ENCODE measurements at regions of chr5 and their contacts with region 1.

Region 1: GRCh38 chr5:138185957-138186447 is 7.1 kb downstream of the KIF20A start:
- DNase-seq: no peak
- ATAC-seq: no peak
- H3K4me3 ChIP-seq: no peak overlapping the region
- H3K27ac ChIP-seq: no peak overlapping the region
- H3K4me1 ChIP-seq: peaks cover 4% of the 10 kb centered on the region
- H3K27me3 ChIP-seq: no peaks in the 10 kb centered on the region
- CTCF ChIP-seq: no peak

Region 2: DNA sequence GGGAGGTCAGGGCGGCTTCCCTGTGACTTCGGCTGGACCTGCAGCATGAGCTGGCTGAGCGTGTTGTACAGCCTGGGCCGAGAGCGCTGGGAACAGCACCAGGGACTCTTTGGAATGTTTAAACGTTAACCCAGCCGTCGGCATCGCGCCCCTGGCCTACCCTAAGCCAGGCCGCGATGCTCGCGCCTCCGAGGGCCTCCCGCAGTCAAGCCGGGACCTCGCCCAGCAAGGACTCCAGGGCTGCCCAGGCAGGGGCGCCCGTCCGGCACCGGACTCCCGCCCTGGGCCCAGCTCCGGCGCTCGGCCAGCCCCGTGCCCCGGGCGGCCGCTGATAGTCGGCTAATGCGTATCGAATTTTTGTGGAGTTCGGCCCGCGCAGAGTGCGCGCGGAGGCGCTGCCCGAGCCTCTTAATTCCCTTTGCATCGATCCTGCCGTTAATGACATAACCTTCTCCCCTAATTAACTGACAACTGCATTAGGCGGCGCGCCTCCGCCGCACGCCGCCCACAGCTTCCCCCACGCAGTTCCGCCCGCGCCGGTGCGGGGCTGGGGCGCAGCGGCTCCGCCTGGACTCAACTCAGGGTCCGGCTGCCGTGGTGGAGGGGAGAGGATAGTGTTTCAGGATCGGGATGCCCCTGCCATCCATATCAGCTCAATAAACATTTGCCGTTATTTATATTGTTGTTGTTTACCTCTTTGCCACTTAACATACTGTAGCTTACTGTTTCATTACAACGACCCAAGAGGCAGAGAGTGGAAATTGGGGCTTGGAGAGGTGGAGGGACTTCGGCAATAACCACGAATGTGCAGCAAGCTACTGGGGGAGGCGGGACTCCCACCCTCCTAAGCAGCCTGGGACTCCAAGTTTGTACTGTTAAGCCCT is 55.9 kb after region 1 on chr5:
- CTCF ChIA-PET with region 1: no interaction called
- POLR2A ChIA-PET with region 1: no interaction called
- in situ Hi-C with region 1: no loop called
- intact Hi-C with region 1: no loop called
- DNase-seq: no peak
- ATAC-seq: peak; percentile 86
- H3K4me3 ChIP-seq: peak overlapping the region; percentile 44 to 60
- H3K27ac ChIP-seq: peak overlapping the region; percentile 39
- H3K4me1 ChIP-seq: peaks cover 6% of the 10 kb centered on the region
- H3K27me3 ChIP-seq: peaks cover 10% of the 10 kb centered on the region
- CTCF ChIP-seq: no peak

Region 3: GRCh38 chr5:138264183-138264582 is 78.2 kb after region 1 on chr5:
- CTCF ChIA-PET with region 1: no interaction called
- POLR2A ChIA-PET with region 1: interaction called, 13 read pairs
- in situ Hi-C with region 1: no loop called
- intact Hi-C with region 1: no loop called
- DNase-seq: no peak
- ATAC-seq: 0 out of 2 replicates have a peak, but pooled peaks have one; percentile 37
- H3K4me3 ChIP-seq: no peak overlapping the region
- H3K27ac ChIP-seq: no peak overlapping the region
- H3K4me1 ChIP-seq: no peaks in the 10 kb centered on the region
- H3K27me3 ChIP-seq: no peaks in the 10 kb centered on the region
- CTCF ChIP-seq: no peak

Region 4: DNA sequence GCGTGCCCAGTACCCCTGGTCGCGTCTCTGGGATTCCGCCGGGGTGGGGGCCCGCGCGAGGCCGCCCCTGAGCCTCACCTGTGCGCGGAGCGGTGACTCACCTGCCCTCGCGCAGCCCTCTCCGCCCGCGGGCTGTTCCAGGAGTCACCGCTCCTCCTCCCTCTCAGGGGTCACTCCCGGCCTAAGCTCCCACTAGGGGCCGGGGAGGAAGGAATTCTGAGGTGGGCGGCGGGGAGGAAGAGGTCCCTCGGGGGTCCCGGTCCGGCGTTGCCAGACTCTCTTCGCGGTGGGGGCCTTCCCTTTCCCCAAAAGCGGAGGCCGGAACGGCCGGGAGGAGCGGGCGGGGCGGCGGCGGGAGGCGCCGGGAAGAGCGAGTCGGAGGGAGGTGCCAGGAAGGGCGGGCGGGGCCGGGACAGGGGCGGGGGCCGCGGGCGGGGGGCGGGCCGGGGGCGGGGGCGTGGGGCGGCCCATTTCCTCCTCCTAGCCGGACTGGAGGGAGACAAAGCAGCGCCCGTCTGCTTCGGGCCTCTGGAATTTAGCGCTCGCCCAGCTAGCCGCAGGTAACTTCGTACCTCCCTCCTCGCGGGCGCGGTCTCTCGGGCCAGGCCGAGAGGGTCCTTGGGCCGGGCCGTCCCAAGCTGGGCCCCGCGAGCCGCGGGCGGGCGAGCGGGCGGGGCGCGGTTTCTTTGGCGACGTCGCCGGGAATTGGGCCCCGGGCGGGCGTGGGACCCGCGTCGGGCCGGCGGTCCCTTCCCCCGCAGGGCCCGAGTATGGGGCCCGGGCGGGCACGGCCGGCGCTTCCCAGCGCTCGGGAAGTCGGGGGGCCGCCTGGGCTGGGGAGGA is 567.2 kb after region 1 on chr5 and contains the start of gene CTNNA1:
- CTCF ChIA-PET with region 1: no interaction called
- POLR2A ChIA-PET with region 1: no interaction called
- in situ Hi-C with region 1: no loop called
- intact Hi-C with region 1: no loop called
- DNase-seq: no peak
- ATAC-seq: peak; percentile 84
- H3K4me3 ChIP-seq: peak within 1 kb of the TSS; percentile 88 to 95
- H3K27ac ChIP-seq: peak within 1 kb of the TSS; percentile 95
- H3K4me1 ChIP-seq: peaks cover 11% of the 10 kb centered on the region
- H3K27me3 ChIP-seq: no peaks in the 10 kb centered on the region
- CTCF ChIP-seq: no peak
- total RNA-seq, gene CTNNA1: 298 TPM